ENCODE measurements at regions of chrX and their contacts with region 1.

Region 1: DNA sequence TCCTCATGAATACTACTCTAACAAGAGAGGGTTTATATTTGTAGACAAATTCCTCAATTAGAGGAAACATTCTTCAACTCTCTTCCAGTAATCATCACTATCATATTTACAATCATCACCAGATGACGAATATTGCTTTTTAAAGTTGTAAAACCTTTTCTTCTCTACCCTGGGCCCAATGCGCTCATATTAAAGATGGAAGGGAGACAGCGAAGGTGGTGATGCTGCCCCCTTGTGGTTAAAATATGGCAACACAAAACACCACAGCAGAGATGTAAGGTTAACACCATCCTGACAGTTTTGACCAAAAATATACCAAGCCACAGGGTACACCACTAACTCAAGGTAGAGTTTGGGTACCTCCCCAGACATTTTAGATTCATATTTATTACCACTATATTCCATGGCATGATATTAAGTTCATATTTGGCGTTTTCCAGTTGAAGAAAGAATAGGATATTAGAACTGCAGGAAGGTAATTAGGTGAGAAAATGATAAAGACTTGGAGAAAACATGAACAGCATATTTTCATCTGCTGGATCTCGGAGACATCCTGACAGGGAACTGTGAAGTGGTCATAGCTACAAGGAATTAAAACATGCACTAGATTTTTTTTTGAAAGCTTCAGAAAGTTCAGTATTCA is 72.8 kb downstream of the SLC9A7 start:
- DNase-seq: peak; percentile 11
- ATAC-seq: peak; percentile 60
- H3K4me3 ChIP-seq: no peak overlapping the region
- H3K27ac ChIP-seq: no peak overlapping the region
- H3K4me1 ChIP-seq: no peaks in the 10 kb centered on the region
- H3K27me3 ChIP-seq: no peaks in the 10 kb centered on the region
- CTCF ChIP-seq: peak; percentile 67
- EP300 ChIP-seq: no peak
- POLR2A ChIP-seq: no peak
- RAD21 ChIP-seq: no peak

Region 2: GRCh38 chrX:46554942-46555341 is 131.2 kb before region 1 on chrX:
- CTCF ChIA-PET with region 1: no interaction called
- POLR2A ChIA-PET with region 1: no interaction called
- in situ Hi-C with region 1: no loop called
- intact Hi-C with region 1: loop called (anchors 1 kb)
- DNase-seq: peak; percentile 6
- ATAC-seq: no peak
- H3K4me3 ChIP-seq: no peak overlapping the region
- H3K27ac ChIP-seq: no peak overlapping the region
- H3K4me1 ChIP-seq: no peaks in the 10 kb centered on the region
- H3K27me3 ChIP-seq: no peaks in the 10 kb centered on the region
- CTCF ChIP-seq: no peak
- EP300 ChIP-seq: no peak
- POLR2A ChIP-seq: no peak
- RAD21 ChIP-seq: no peak

Region 3: GRCh38 chrX:46653482-46653881 is 32.6 kb before region 1 on chrX:
- CTCF ChIA-PET with region 1: no interaction called
- POLR2A ChIA-PET with region 1: no interaction called
- in situ Hi-C with region 1: no loop called
- intact Hi-C with region 1: no loop called
- DNase-seq: peak; percentile 3
- ATAC-seq: no peak
- H3K4me3 ChIP-seq: no peak overlapping the region
- H3K27ac ChIP-seq: no peak overlapping the region
- H3K4me1 ChIP-seq: no peaks in the 10 kb centered on the region
- H3K27me3 ChIP-seq: no peaks in the 10 kb centered on the region
- CTCF ChIP-seq: peak; percentile 36
- EP300 ChIP-seq: no peak
- POLR2A ChIP-seq: no peak
- RAD21 ChIP-seq: no peak

Measured in HepG2 (cell line).